Activated CD4-positive, alpha-beta memory T cell treated with anti-CD3 and anti-CD28 coated beads for 36 hours (primary cell): ENCODE measurements at regions of chr3 and their contacts with region 1.

Region 1: GRCh38 chr3:59386165-59386564 is 336.3 kb upstream of the CFAP20DC start:
- DNase-seq: no peak
- H3K4me3 Mint-ChIP-seq: peak overlapping the region; percentile 24
- H3K27ac Mint-ChIP-seq: peak overlapping the region; percentile 76
- H3K4me1 Mint-ChIP-seq: peaks cover 72% of the 10 kb centered on the region
- H3K27me3 Mint-ChIP-seq: peaks cover 2% of the 10 kb centered on the region

Region 2: GRCh38 chr3:59313365-59313764 is 72.8 kb before region 1 on chr3:
- CTCF ChIA-PET with region 1: no interaction called
- POLR2A ChIA-PET with region 1: no interaction called
- intact Hi-C with region 1: loop called (anchors 5 kb)
- DNase-seq: peak; percentile 68
- H3K4me3 Mint-ChIP-seq: no peak overlapping the region
- H3K27ac Mint-ChIP-seq: no peak overlapping the region
- H3K4me1 Mint-ChIP-seq: peaks cover 23% of the 10 kb centered on the region
- H3K27me3 Mint-ChIP-seq: no peaks in the 10 kb centered on the region

Region 3: DNA sequence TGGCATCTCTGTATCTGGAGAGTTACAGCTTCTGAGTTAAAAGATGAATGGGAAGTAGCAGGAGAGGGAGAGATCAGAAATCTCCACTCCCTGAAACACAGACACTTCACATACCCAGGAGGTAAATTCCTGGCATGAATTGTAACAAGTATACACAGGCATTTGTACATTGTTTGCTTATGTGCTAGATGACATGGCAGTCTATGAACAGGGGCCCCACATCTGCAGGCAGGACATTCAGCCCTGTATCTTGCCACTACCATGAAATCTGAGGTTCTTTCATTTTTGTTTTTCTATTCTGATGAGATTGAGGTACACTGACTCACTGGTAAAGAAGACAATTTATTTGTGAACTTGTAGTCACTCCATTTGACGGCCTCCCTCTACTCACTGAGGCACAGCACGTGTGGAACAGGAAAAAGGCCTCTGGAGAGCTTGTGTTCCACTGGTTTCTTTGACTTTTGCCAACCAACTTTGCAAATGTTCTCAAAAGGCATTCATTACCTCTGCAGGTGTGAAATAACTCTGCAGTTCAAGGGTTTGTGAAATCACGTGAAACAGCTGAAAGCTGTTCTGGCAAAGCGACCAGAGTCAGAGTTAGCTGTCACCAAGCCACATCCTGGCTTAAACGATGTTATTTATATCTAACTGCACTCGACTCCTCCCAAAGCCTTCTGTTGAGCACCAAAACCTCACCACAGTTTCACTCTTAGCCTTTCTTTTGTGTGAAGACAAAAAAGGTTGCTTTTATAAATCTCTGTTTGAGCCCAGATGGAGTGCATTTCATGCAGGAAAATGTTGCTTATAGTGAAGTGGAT is 65.0 kb after region 1 on chr3:
- CTCF ChIA-PET with region 1: interaction called, 3 read pairs
- POLR2A ChIA-PET with region 1: no interaction called
- intact Hi-C with region 1: loop called (anchors 1 kb)
- DNase-seq: peak; percentile 73
- H3K4me3 Mint-ChIP-seq: peak overlapping the region; percentile 53
- H3K27ac Mint-ChIP-seq: peak overlapping the region; percentile 94
- H3K4me1 Mint-ChIP-seq: peaks cover 64% of the 10 kb centered on the region
- H3K27me3 Mint-ChIP-seq: no peaks in the 10 kb centered on the region

Region 4: GRCh38 chr3:59464187-59464586 is 78.0 kb after region 1 on chr3:
- CTCF ChIA-PET with region 1: no interaction called
- POLR2A ChIA-PET with region 1: no interaction called
- intact Hi-C with region 1: no loop called
- DNase-seq: no peak
- H3K4me3 Mint-ChIP-seq: no peak overlapping the region
- H3K27ac Mint-ChIP-seq: no peak overlapping the region
- H3K4me1 Mint-ChIP-seq: peaks cover 4% of the 10 kb centered on the region
- H3K27me3 Mint-ChIP-seq: no peaks in the 10 kb centered on the region

Region 5: DNA sequence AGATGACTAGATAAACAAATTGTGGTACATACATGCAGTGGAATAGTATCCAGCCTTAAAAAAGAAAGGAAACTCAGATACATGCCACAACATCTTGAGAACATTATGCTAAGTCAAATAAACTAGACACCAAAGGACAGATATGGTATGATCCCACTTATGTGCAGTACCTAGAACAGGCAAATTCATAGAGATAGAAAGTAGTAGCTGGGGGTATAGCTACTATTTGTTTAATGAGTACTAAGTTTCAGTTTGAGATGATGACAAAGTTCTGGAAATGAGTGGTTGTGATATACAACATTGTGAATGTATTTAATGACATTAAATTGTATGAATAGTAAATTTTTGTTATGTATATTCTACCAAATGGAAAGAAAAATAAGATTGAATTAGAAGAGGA is 140.8 kb after region 1 on chr3:
- CTCF ChIA-PET with region 1: interaction called, 3 read pairs
- POLR2A ChIA-PET with region 1: interaction called, 7 read pairs
- intact Hi-C with region 1: loop called (anchors 1 kb)
- DNase-seq: no peak
- H3K4me3 Mint-ChIP-seq: no peak overlapping the region
- H3K27ac Mint-ChIP-seq: peak overlapping the region; percentile 0
- H3K4me1 Mint-ChIP-seq: peaks cover 15% of the 10 kb centered on the region
- H3K27me3 Mint-ChIP-seq: peaks cover 2% of the 10 kb centered on the region

Region 6: DNA sequence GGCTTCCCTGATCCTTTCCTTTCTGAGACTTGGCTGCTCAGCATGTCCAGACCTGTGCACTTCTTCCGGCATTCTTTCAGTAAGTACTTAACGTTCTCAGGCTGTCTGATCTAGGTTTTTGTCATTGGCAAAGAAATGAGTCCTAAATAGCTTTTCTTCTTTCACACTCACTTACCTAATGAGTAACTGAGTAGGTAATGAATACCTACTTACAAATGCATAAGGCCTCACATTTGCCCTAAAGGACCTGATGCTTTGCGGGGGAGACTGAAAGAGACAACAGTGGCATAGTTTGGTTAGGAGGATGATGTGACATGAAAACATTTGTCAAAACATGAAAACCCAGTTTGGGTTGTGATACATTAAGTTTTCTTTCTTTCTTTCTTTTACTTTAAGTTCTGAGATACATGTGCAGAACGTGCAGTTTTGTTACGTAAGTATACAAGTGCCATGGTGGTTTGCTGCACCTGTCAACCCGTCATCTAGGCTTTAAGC is 180.4 kb after region 1 on chr3:
- CTCF ChIA-PET with region 1: no interaction called
- POLR2A ChIA-PET with region 1: interaction called, 4 read pairs
- intact Hi-C with region 1: loop called (anchors 1 kb)
- DNase-seq: peak; percentile 66
- H3K4me3 Mint-ChIP-seq: no peak overlapping the region
- H3K27ac Mint-ChIP-seq: peak overlapping the region; percentile 18
- H3K4me1 Mint-ChIP-seq: peaks cover 17% of the 10 kb centered on the region
- H3K27me3 Mint-ChIP-seq: peaks cover 9% of the 10 kb centered on the region

Region 7: GRCh38 chr3:59677747-59678687 is 291.9 kb after region 1 on chr3:
- CTCF ChIA-PET with region 1: no interaction called
- POLR2A ChIA-PET with region 1: no interaction called
- intact Hi-C with region 1: no loop called
- DNase-seq: no peak
- H3K4me3 Mint-ChIP-seq: no peak overlapping the region
- H3K27ac Mint-ChIP-seq: no peak overlapping the region
- H3K4me1 Mint-ChIP-seq: no peaks in the 10 kb centered on the region
- H3K27me3 Mint-ChIP-seq: no peaks in the 10 kb centered on the region

Region 8: DNA sequence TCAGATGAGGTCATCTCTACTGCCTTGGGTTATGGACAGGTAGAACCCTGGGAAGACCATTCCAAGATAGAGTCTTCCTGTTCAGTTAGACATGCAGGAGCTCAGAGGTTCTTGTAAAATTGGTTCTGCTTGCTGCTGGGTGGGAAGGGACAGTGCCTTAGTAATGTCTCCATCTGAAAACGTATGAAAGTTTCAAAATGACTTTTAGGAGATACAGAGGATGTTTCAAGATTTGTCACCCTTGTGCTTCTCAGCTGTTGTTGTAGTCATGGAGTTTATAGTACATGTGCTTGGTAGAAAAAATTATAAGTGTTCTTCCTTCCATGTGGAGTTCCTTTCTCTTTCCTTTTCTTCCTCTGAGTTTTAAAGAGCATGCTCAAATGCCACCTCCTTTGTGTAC is 548.9 kb after region 1 on chr3:
- CTCF ChIA-PET with region 1: no interaction called
- POLR2A ChIA-PET with region 1: no interaction called
- intact Hi-C with region 1: loop called (anchors 1 kb)
- DNase-seq: peak; percentile 29
- H3K4me3 Mint-ChIP-seq: peak overlapping the region; percentile 8
- H3K27ac Mint-ChIP-seq: peak overlapping the region; percentile 74
- H3K4me1 Mint-ChIP-seq: peaks cover 53% of the 10 kb centered on the region
- H3K27me3 Mint-ChIP-seq: no peaks in the 10 kb centered on the region